Heart right ventricle (tissue), 16 donors: ENCODE measurements at regions of chr12 and their contacts with region 1.

Region 1: DNA sequence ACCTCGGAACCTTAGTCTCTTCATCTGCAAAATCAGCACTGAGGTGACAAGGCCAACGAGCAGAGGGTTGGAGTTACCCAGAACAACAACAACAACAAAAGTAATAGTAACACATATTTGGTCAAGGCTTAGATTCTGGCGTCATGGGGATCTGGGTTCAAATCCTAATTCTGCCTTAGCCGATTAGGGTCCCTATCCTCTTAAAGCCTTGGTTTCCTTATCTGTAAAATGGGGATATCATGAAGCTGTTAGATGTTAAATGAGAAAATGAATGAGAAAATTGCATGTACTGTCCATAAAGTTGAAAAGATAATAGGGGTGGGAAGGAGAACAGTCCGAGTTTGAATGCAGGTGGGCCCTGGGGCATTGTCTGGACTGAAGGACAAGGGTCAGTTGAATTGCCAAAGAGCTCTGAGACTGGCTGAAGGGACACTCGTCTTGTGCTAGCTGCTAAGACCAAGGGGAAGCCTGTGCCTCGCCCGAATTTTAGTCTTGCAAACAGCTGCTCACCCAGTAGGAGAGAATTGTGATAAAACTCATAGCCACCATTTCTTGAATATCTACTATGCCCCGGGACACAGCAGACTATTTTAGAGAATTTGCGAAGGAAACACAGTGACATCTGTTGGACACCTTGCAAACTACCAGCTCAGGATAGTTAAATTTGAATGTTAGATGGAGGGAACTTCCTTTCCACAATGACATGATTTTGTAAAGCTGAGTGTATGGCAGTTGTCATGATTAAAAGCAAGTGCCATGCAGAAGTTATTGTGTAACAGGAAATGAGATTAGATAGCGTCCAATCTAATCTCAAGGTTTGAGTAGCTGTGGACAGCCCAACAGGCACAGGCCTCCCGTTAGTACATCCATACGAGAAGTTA is 6.8 kb upstream of the HNF1A start:
- DNase-seq: peak in 1 of 2 donors; percentile 34
- ATAC-seq: peak; percentile 57 to 87 (median 80)
- H3K4me3 ChIP-seq: no peak overlapping the region
- H3K27ac ChIP-seq: no peak overlapping the region
- H3K4me1 ChIP-seq: peaks cover 0 to 3% (median 0%) of the 10 kb centered on the region in 9 donors
- H3K27me3 ChIP-seq: no peaks in the 10 kb centered on the region
- CTCF ChIP-seq: peak; percentile 44 to 83 (median 78)

Region 2: GRCh38 chr12:120640840-120641833 is 330.4 kb before region 1 on chr12:
- intact Hi-C with region 1: loop called in 8 of 10 experiments (anchors 1 to 5 kb)
- DNase-seq: peak; percentile 32 to 55
- ATAC-seq: peak; percentile 83 to 92 (median 90)
- H3K4me3 ChIP-seq: peak overlapping the region in 9 of 10 donors; percentile 37 to 55 (median 44)
- H3K27ac ChIP-seq: no peak overlapping the region
- H3K4me1 ChIP-seq: peaks cover 6 to 13% (median 11%) of the 10 kb centered on the region in 9 donors
- H3K27me3 ChIP-seq: peaks cover 10 to 75% (median 62%) of the 10 kb centered on the region in 7 donors
- CTCF ChIP-seq: no peak

Region 3: DNA sequence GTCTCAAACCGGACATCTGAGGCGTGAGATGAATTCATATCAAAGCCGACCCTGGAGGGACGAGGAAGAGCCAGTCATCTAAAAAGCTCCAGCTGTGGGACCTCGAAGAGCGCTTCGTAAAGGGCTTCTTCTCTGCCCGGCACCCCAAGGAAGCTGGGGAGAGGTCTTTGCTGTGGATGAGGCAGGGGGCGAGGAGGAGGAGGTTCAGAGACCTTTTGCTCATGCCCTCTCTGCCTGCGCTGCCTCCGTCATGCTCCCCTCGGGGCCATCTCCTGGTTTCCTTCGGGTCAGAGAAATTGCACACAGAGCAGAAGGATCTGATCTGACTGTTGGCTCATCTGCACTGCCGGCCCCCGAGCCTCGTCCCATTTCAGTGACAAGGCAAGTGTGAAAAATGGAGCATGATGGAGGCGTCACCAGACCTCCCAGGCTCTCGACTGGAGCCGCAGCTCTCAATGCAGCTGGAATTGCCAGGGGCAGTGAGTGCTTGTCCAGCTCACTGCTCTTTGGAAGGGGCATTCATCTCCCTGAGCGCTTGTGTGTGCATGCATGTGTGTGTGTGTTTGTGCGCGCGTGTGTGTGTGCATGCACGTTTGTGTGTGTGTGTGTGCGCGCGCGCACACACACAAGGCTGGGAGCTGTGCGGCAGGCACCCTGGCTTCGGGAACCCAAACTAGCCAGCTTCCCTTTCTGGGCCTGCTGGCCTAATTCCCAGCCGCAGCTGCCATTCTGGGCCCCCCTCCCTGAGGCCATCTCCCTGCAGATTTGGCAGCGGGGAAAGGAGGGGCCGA is 321.9 kb before region 1 on chr12:
- intact Hi-C with region 1: loop called in 8 of 10 experiments (anchors 1 to 5 kb)
- DNase-seq: peak; percentile 16 to 51
- ATAC-seq: peak in 4 of 8 donors; percentile 1 to 29 (median 5)
- H3K4me3 ChIP-seq: peak overlapping the region; percentile 33 to 57 (median 48)
- H3K27ac ChIP-seq: peak overlapping the region; percentile 31 to 85 (median 68)
- H3K4me1 ChIP-seq: peaks cover 12 to 57% (median 46%) of the 10 kb centered on the region in 9 donors
- H3K27me3 ChIP-seq: peaks cover 0 to 38% (median 12%) of the 10 kb centered on the region in 7 donors
- CTCF ChIP-seq: peak in 3 of 9 donors; percentile 20 to 33 (median 21)

Region 4: GRCh38 chr12:120710031-120710804 is 261.3 kb before region 1 on chr12 and contains the start of gene UNC119B:
- intact Hi-C with region 1: loop called in 1 of 10 experiments (anchors 10 kb)
- DNase-seq: peak; percentile 72 to 79
- ATAC-seq: peak; percentile 85 to 95 (median 92)
- H3K4me3 ChIP-seq: peak within 1 kb of the TSS; percentile 50 to 96 (median 88)
- H3K27ac ChIP-seq: peak within 1 kb of the TSS; percentile 75 to 96 (median 92)
- H3K4me1 ChIP-seq: peaks cover 9 to 43% (median 31%) of the 10 kb centered on the region in 9 donors
- H3K27me3 ChIP-seq: no peaks in the 10 kb centered on the region
- CTCF ChIP-seq: no peak
- total RNA-seq, gene UNC119B: 5.9 to 15.4 (median 9.6) TPM

Region 5: DNA sequence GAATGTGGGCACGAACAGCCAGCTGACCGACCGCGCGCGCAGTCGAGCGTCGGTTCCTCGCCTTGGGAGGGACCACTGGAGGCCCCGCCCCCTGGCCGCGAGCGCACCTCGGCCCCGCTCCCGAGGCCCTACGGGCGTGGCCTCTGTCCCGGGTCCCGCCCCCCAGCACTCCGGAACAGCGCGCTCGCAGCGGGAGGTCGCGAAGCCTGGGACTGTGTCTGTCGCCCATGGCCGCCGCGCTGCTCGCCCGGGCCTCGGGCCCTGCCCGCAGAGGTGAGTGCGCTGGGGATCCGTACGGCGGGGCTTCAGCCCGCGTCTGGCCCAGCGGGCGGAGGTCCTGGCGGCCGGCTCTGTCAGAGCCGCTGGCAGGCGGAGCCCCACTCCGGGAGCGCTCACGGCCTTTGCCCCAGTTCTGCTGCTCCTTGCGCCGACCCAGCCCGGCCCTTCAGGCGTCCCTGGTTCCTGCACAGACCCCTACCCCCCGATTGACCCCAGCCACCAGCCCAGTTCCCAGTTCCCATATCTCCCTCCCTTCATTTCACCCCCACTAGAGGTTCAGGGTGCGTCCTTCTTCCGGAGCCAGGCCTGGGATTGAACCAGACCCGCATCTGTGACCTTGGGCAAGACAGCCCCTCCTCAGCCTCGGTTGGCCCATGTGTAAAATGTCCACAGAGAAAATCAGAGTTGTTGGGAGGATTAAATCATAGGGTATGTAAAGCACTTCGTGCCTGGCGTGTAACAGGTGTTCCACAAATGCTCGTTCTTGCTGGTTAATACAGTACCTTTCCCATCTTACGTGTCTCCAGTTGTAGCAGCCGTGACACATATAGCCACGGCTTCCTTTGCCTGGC is 245.7 kb before region 1 on chr12 and contains the start of gene ACADS:
- intact Hi-C with region 1: loop called in 7 of 10 experiments (anchors 5 to 10 kb)
- DNase-seq: peak; percentile 88 to 94
- ATAC-seq: peak; percentile 98 to 99 (median 99)
- H3K4me3 ChIP-seq: peak within 1 kb of the TSS; percentile 55 to 90 (median 78)
- H3K27ac ChIP-seq: peak within 1 kb of the TSS; percentile 34 to 91 (median 88)
- H3K4me1 ChIP-seq: peaks cover 0 to 30% (median 19%) of the 10 kb centered on the region in 9 donors
- H3K27me3 ChIP-seq: no peaks in the 10 kb centered on the region
- CTCF ChIP-seq: peak in 3 of 9 donors; percentile 14 to 28 (median 25)
- total RNA-seq, gene ACADS: 67.0 to 119 (median 77.9) TPM

Region 6: DNA sequence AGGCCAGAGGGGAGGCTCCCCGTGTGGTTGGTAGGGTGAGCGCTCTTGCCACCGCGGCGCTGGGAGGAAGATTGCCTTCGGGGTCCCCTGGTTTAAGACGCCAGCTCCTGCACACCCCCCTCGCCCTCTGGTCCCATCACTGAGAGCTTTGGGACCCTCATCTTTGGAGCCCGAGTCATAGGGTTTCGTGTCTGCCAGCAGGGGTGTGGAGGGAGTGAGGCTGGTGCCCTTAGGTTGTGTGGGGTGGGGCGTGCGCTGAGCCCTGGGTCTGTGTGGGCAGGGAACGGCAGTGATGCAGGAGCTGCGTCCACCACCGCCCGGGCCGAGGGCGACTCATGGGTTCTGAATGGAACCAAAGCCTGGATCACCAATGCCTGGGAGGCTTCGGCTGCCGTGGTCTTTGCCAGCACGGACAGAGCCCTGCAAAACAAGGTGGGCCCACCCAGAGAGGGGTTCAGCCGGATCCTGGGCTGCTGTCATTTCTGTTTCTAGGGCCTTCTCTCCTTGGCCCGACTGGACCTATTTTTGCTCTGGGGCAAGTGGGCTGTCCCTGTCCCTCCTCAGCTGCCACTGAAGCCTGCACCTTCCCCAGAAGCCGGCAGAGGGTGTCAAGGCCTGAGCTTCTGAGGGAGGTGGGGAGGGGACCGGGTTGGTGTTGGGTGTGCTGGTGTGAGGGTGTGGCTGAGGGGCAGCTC is 233.8 kb before region 1 on chr12:
- intact Hi-C with region 1: loop called in 2 of 10 experiments (anchors 10 kb)
- DNase-seq: no peak
- ATAC-seq: no peak
- H3K4me3 ChIP-seq: no peak overlapping the region
- H3K27ac ChIP-seq: no peak overlapping the region
- H3K4me1 ChIP-seq: no peaks in the 10 kb centered on the region
- H3K27me3 ChIP-seq: no peaks in the 10 kb centered on the region
- CTCF ChIP-seq: peak in 5 of 9 donors; percentile 7 to 28 (median 17)

Region 7: DNA sequence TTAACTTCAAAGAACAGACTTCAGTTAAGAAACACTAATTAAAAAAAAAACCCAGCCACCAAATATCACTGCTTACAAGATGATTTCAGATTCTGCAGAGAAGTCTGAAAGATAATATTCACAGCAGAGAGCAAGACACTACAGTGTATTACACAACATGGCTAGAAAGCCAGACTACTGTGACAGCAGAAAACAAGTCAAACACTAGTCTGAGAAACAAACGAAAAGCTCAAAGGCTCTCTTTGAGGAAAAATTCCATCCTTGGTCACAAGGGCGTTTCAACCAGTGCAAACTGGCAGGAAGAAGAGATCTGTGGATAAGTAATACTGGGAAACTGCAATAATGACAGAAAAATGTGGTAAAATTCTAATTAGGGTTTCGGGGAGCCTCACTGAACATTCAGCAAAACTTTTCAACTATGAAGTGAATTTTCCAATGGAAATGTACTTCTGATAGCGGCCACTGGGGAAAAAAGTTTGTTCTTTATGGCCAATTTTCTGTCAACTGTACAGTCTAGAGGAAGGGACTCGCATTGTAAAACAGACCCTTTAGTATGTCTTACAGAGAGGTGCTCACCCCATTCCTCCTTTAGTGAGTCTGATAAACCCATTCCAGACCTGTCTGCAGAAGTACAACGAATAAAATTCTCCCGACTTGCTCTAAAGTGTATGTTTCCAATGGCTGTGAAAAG is 195.5 kb before region 1 on chr12:
- intact Hi-C with region 1: no loop called
- DNase-seq: no peak
- ATAC-seq: peak in 1 of 8 donors; percentile 47
- H3K4me3 ChIP-seq: no peak overlapping the region
- H3K27ac ChIP-seq: peak overlapping the region in 4 of 10 donors; percentile 3 to 38 (median 14)
- H3K4me1 ChIP-seq: peaks cover 4 to 37% (median 20%) of the 10 kb centered on the region in 9 donors
- H3K27me3 ChIP-seq: no peaks in the 10 kb centered on the region
- CTCF ChIP-seq: no peak

Region 8: DNA sequence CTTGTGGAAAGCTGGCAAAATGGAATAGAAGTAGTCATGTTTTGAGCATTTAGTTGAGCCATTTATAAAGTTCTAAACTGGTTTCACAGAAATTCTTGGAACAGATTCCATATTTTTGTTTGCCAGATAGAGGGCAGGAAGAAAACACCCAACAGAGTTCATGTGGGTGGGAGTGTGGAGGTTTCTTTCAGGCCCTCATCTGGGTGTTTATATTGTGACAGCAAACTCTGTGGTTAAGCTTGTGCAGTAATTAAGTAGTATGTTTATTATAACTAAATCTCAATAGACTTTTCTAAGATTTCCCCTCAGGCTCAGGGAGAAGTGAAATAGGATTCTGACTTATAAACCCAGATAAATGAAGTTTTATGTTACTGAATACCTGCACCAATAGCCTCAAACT is 124.8 kb before region 1 on chr12:
- intact Hi-C with region 1: no loop called
- DNase-seq: no peak
- ATAC-seq: no peak
- H3K4me3 ChIP-seq: no peak overlapping the region
- H3K27ac ChIP-seq: peak overlapping the region in 3 of 10 donors; percentile 1 to 83 (median 35)
- H3K4me1 ChIP-seq: peaks cover 4 to 97% (median 88%) of the 10 kb centered on the region in 9 donors
- H3K27me3 ChIP-seq: no peaks in the 10 kb centered on the region
- CTCF ChIP-seq: no peak

Region 9: DNA sequence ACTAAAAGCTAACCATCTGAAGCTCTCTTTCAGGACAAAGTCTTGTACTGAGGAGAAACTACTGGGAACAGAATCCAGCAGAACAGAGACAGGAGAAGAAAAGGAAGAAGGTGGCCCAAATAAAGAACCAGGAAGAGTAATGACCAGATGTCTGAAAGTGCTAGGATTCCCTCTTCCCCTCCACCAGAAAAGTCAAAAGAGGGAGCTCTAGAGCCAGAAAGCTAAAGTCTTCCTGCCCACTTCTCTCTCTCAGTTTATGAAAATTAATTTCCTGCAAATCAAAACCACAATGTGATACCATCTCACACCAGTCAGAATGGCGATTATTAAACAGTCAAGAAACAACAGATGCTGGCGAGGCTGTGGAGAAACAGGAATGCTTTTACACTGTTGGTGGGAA is 114.6 kb before region 1 on chr12:
- intact Hi-C with region 1: loop called in 2 of 10 experiments (anchors 5 to 10 kb)
- DNase-seq: no peak
- ATAC-seq: peak in 2 of 8 donors; percentile 28 to 37
- H3K4me3 ChIP-seq: no peak overlapping the region
- H3K27ac ChIP-seq: peak overlapping the region in 1 of 10 donors; percentile 12
- H3K4me1 ChIP-seq: peaks cover 0 to 49% (median 38%) of the 10 kb centered on the region in 9 donors
- H3K27me3 ChIP-seq: no peaks in the 10 kb centered on the region
- CTCF ChIP-seq: peak in 5 of 9 donors; percentile 14 to 53 (median 45)